ENCODE measurements at regions of chr4 and their contacts with region 1.

Region 1: DNA sequence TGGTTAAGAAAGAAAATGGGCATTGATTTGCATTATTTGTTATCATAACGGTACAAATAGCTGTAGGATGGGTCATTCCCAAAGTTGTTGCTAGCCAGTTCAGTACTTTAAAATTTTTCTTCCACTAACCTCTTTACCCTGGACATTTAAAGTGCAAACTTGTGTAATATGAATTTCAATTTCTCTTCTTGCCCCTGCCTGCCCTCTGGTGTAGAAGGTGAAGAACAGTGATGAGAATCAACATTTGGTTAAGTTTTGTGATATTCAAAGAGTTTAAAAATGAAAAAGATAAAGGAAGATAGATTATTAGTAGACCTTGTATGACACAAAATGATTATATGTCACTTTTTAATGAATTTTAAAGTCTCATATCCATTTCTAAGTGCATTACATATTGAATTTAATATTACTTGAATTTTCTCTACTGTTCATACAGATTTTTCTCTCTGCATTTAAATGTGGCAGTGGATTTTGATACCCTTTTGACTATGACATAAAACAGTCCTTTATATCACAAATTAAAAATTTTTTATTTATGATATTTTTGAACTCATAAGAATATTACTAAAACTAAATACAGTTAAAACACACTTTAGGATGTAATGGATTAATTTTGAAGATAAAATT is 337.7 kb downstream of the BMPR1B start:
- DNase-seq: no peak
- ATAC-seq: peak in 2 of 8 donors; percentile 44 to 47
- H3K4me3 ChIP-seq: no peak overlapping the region
- H3K27ac ChIP-seq: no peak overlapping the region
- H3K4me1 ChIP-seq: peaks cover 0 to 4% (median 0%) of the 10 kb centered on the region in 9 donors
- H3K27me3 ChIP-seq: no peaks in the 10 kb centered on the region
- CTCF ChIP-seq: peak in 7 of 9 donors; percentile 41 to 69 (median 60)

Region 2: DNA sequence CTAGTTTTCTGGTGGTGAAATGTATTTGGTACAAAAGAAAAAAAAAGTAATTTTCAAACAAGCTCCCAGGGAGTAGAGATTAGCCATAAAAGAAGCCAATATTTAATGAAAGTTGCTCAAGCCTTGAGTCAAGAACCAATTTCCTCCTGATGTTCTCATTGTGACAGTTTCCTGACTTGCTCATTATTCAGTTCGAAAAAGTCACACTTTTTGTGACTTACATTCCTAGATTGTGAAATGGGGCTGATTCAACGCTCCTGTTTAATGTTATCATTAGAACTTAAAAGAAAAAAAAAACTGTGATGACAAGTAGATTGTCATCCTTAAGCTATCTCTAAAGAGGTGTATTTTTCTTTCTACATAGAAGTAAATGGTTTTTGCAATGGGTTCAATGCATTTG is 460.3 kb before region 1 on chr4:
- intact Hi-C with region 1: loop called in 1 of 10 experiments (anchors 10 kb)
- DNase-seq: no peak
- ATAC-seq: no peak
- H3K4me3 ChIP-seq: no peak overlapping the region
- H3K27ac ChIP-seq: no peak overlapping the region
- H3K4me1 ChIP-seq: peaks cover 0 to 29% (median 16%) of the 10 kb centered on the region in 9 donors
- H3K27me3 ChIP-seq: no peaks in the 10 kb centered on the region
- CTCF ChIP-seq: no peak

Region 3: GRCh38 chr4:94746750-94747149 is 348.7 kb before region 1 on chr4:
- intact Hi-C with region 1: loop called in 1 of 10 experiments (anchors 10 kb)
- DNase-seq: no peak
- ATAC-seq: no peak
- H3K4me3 ChIP-seq: no peak overlapping the region
- H3K27ac ChIP-seq: no peak overlapping the region
- H3K4me1 ChIP-seq: no peaks in the 10 kb centered on the region
- H3K27me3 ChIP-seq: peaks cover 0 to 36% (median 12%) of the 10 kb centered on the region in 7 donors
- CTCF ChIP-seq: no peak

Region 4: DNA sequence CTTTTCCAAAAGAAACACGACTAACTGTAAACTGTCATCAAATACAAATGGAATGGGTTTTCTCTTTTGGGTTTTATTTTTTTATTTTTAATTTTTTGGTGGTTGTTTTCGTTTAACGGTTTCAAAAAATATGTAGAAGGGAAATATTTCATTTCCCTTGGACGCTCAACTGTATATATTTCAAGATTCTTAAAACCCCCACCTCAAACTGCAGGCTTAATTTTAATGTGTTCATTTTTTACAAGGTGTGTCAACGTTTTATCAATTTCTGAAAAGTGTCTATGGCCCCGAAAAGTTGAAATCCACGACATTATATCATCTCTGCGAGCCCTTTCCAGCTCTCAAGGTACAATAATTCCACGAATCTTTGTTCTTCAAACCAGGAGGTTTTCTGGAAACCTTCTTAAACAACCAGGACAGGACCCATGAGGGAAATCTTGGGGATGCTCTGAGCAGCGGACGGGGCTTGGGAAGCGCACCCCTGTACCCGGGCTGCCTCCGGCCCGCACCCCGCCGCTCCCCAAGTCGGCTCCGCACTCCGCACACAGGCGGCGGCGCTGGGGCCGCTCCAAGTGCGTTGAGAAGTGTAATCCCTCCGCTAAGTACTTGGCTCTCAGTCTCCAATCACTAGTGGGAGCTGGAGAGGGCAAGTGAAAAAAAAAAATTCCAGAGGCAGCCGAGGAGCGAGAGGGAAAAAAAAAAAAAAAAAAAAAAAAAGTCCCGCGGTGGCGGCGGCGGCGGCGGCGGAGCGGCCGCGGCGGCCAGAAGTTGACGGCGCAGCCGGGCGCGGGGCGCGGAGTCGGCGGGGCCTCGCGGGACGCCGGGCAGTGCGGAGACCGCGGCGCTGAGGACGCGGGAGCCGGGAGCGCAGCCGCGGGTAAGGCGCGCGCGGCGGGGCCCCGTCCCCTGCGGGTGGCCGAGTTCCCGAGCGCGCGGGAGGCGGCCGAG is 338.0 kb before region 1 on chr4 and contains the start of gene BMPR1B:
- intact Hi-C with region 1: loop called in 1 of 10 experiments (anchors 5 kb)
- DNase-seq: no peak
- ATAC-seq: peak in 6 of 8 donors; percentile 19 to 74 (median 46)
- H3K4me3 ChIP-seq: peak within 1 kb of the TSS; percentile 18 to 57 (median 49)
- H3K27ac ChIP-seq: no peak within 1 kb of the TSS
- H3K4me1 ChIP-seq: peaks cover 0 to 15% (median 4%) of the 10 kb centered on the region in 9 donors
- H3K27me3 ChIP-seq: peaks cover 0 to 93% (median 67%) of the 10 kb centered on the region in 7 donors
- CTCF ChIP-seq: peak in 1 of 9 donors; percentile 16
- total RNA-seq, gene BMPR1B: 1.4 to 7.8 (median 3.0) TPM

Region 5: GRCh38 chr4:94995684-94996394 is 99.6 kb before region 1 on chr4:
- intact Hi-C with region 1: loop called in 1 of 10 experiments (anchors 10 kb)
- DNase-seq: peak in 1 of 2 donors; percentile 29
- ATAC-seq: peak; percentile 79 to 99 (median 95)
- H3K4me3 ChIP-seq: peak overlapping the region in 9 of 10 donors; percentile 1 to 47 (median 31)
- H3K27ac ChIP-seq: peak overlapping the region; percentile 6 to 72 (median 55)
- H3K4me1 ChIP-seq: peaks cover 0 to 10% (median 0%) of the 10 kb centered on the region in 9 donors
- H3K27me3 ChIP-seq: no peaks in the 10 kb centered on the region
- CTCF ChIP-seq: no peak

Measured in heart right ventricle (tissue), 16 donors.